GM12878 (cell line): ENCODE measurements at regions of chr6 and their contacts with region 1.

Region 1: GRCh38 chr6:97186416-97186999 is 96.5 kb downstream of the MMS22L start:
- DNase-seq: peak; percentile 26
- ATAC-seq: peak; percentile 99
- H3K4me3 ChIP-seq: no peak overlapping the region
- H3K27ac ChIP-seq: no peak overlapping the region
- H3K4me1 ChIP-seq: no peaks in the 10 kb centered on the region
- H3K27me3 ChIP-seq: no peaks in the 10 kb centered on the region
- CTCF ChIP-seq: peak; percentile 83 to 95 (median 91); a peak in 5 of 6 replicates
- EP300 ChIP-seq: no peak
- POLR2A ChIP-seq: no peak
- RAD21 ChIP-seq: peak; percentile 95

Region 2: GRCh38 chr6:96923871-96924493 is 262.5 kb before region 1 on chr6:
- CTCF ChIA-PET with region 1: no interaction called
- POLR2A ChIA-PET with region 1: no interaction called
- RAD21 ChIA-PET with region 1: no interaction called
- SMC1A ChIA-PET with region 1: no interaction called
- in situ Hi-C with region 1: no loop called
- intact Hi-C with region 1: no loop called
- DNase-seq: no peak
- ATAC-seq: peak; percentile 80
- H3K4me3 ChIP-seq: peak overlapping the region; percentile 60
- H3K27ac ChIP-seq: peak overlapping the region; percentile 57
- H3K4me1 ChIP-seq: peaks cover 6% of the 10 kb centered on the region
- H3K27me3 ChIP-seq: no peaks in the 10 kb centered on the region; a peak in 1 of 4 replicates
- CTCF ChIP-seq: no peak
- EP300 ChIP-seq: no peak
- POLR2A ChIP-seq: peak; percentile 83
- RAD21 ChIP-seq: no peak

Region 3: GRCh38 chr6:97068211-97068610 is 118.3 kb before region 1 on chr6:
- CTCF ChIA-PET with region 1: interaction called, 4 read pairs
- POLR2A ChIA-PET with region 1: no interaction called
- RAD21 ChIA-PET with region 1: no interaction called
- SMC1A ChIA-PET with region 1: interaction called, 3 read pairs
- in situ Hi-C with region 1: no loop called
- intact Hi-C with region 1: loop called (anchors 1 kb)
- DNase-seq: no peak
- ATAC-seq: 0 out of 3 replicates have a peak, but pooled peaks have one; percentile 33
- H3K4me3 ChIP-seq: no peak overlapping the region
- H3K27ac ChIP-seq: no peak overlapping the region
- H3K4me1 ChIP-seq: no peaks in the 10 kb centered on the region
- H3K27me3 ChIP-seq: no peaks in the 10 kb centered on the region
- CTCF ChIP-seq: peak in 2 of 3 experiments; percentile 45 to 49; a peak in 4 of 6 replicates
- EP300 ChIP-seq: no peak
- POLR2A ChIP-seq: no peak
- RAD21 ChIP-seq: peak; percentile 64

Region 4: GRCh38 chr6:97145691-97146090 is 40.8 kb before region 1 on chr6:
- CTCF ChIA-PET with region 1: interaction called, 3 read pairs
- POLR2A ChIA-PET with region 1: interaction called, 11 read pairs
- RAD21 ChIA-PET with region 1: no interaction called
- SMC1A ChIA-PET with region 1: no interaction called
- in situ Hi-C with region 1: no loop called
- intact Hi-C with region 1: no loop called
- DNase-seq: no peak
- ATAC-seq: no peak
- H3K4me3 ChIP-seq: no peak overlapping the region
- H3K27ac ChIP-seq: no peak overlapping the region
- H3K4me1 ChIP-seq: no peaks in the 10 kb centered on the region
- H3K27me3 ChIP-seq: no peaks in the 10 kb centered on the region
- CTCF ChIP-seq: no peak
- EP300 ChIP-seq: no peak
- POLR2A ChIP-seq: no peak
- RAD21 ChIP-seq: no peak

Region 5: DNA sequence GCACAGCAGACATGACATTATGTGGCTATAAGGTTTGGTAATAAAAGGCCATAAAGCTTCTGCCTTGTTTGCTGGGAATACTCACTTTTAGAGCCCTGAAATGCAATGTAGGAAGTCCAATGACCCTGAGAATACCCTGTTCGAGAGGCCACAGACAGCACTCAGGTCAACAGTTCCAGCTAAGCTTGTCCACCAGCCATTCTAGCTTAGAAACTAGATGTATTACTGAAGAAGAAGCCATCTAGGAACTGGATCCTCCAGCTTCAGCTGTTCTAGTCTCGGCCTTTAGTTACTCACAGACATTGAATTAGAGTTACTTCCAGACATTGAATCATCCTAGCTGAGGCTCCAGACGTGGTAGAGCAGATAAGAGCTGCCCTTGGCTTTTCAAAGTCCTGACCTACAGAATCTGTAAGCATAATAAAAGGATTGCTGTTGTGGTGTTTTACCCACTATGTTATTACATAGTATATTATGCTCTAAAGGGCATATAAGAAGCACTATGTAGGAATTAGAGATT is 11.6 kb after region 1 on chr6:
- CTCF ChIA-PET with region 1: interaction called, 30 read pairs
- POLR2A ChIA-PET with region 1: interaction called, 3 read pairs
- RAD21 ChIA-PET with region 1: interaction called, 4 read pairs
- SMC1A ChIA-PET with region 1: interaction called, 8 read pairs
- in situ Hi-C with region 1: no loop called
- intact Hi-C with region 1: no loop called
- DNase-seq: no peak
- ATAC-seq: no peak
- H3K4me3 ChIP-seq: no peak overlapping the region
- H3K27ac ChIP-seq: no peak overlapping the region
- H3K4me1 ChIP-seq: no peaks in the 10 kb centered on the region
- H3K27me3 ChIP-seq: no peaks in the 10 kb centered on the region
- CTCF ChIP-seq: no peak
- EP300 ChIP-seq: no peak
- POLR2A ChIP-seq: no peak
- RAD21 ChIP-seq: no peak

Region 6: GRCh38 chr6:97203343-97203742 is 16.8 kb after region 1 on chr6:
- CTCF ChIA-PET with region 1: interaction called, 30 read pairs
- POLR2A ChIA-PET with region 1: interaction called, 3 read pairs
- RAD21 ChIA-PET with region 1: interaction called, 4 read pairs
- SMC1A ChIA-PET with region 1: interaction called, 8 read pairs
- in situ Hi-C with region 1: no loop called
- intact Hi-C with region 1: no loop called
- DNase-seq: no peak
- ATAC-seq: no peak
- H3K4me3 ChIP-seq: no peak overlapping the region
- H3K27ac ChIP-seq: no peak overlapping the region
- H3K4me1 ChIP-seq: no peaks in the 10 kb centered on the region
- H3K27me3 ChIP-seq: no peaks in the 10 kb centered on the region
- CTCF ChIP-seq: no peak
- EP300 ChIP-seq: no peak
- POLR2A ChIP-seq: no peak
- RAD21 ChIP-seq: no peak

Region 7: DNA sequence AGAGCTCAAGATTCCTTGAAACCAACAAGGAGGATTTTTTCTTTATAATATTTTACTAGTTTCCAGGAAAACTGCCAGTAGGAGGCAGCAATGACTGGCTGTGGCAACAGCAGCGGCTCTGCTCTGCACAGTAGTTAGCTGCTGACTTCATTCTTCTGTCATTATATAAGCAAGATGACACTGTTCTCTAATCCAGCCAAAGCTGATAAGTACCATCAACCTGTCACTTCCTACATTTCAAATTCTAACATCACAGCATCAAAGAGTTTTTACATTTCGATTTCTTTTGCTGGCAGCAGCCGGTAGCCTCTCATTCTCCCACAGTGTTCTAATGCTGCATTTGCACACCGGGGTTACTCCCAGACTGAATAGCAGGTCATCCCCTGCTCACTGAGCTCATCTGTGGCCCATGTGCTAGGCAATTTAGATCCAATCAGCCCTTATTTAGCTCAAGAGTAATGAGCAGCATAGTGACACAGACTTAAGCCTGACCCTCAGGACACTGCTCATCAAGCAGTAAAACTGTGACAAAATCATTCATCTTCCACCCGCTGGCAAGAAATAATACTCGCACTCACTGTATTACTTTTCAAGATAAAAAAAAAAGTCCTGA is 28.8 kb after region 1 on chr6:
- CTCF ChIA-PET with region 1: interaction called, 39 read pairs
- POLR2A ChIA-PET with region 1: no interaction called
- RAD21 ChIA-PET with region 1: interaction called, 4 read pairs
- SMC1A ChIA-PET with region 1: interaction called, 4 read pairs
- in situ Hi-C with region 1: no loop called
- intact Hi-C with region 1: no loop called
- DNase-seq: no peak
- ATAC-seq: peak; percentile 34; the same call in 1 of the 3 replicates
- H3K4me3 ChIP-seq: no peak overlapping the region
- H3K27ac ChIP-seq: no peak overlapping the region
- H3K4me1 ChIP-seq: no peaks in the 10 kb centered on the region
- H3K27me3 ChIP-seq: no peaks in the 10 kb centered on the region
- CTCF ChIP-seq: peak; percentile 9 to 31 (median 16); a peak in 4 of 6 replicates
- EP300 ChIP-seq: no peak
- POLR2A ChIP-seq: no peak
- RAD21 ChIP-seq: peak; percentile 55

Region 8: GRCh38 chr6:97394160-97394748 is 207.7 kb after region 1 on chr6:
- CTCF ChIA-PET with region 1: interaction called, 103 read pairs
- POLR2A ChIA-PET with region 1: no interaction called
- RAD21 ChIA-PET with region 1: interaction called, 18 read pairs
- SMC1A ChIA-PET with region 1: interaction called, 33 read pairs
- in situ Hi-C with region 1: loop called (anchors 5 kb)
- intact Hi-C with region 1: loop called (anchors 1 kb)
- DNase-seq: peak; percentile 20
- ATAC-seq: peak; percentile 81
- H3K4me3 ChIP-seq: no peak overlapping the region
- H3K27ac ChIP-seq: no peak overlapping the region
- H3K4me1 ChIP-seq: no peaks in the 10 kb centered on the region
- H3K27me3 ChIP-seq: no peaks in the 10 kb centered on the region
- CTCF ChIP-seq: peak; percentile 82 to 89 (median 82)
- EP300 ChIP-seq: no peak
- POLR2A ChIP-seq: no peak
- RAD21 ChIP-seq: peak; percentile 96